Activated CD4-positive, alpha-beta T cell treated with anti-CD3 and anti-CD28 coated beads for 36 hours (primary cell): ENCODE measurements at regions of chr7 and their contacts with region 1.

Region 1: DNA sequence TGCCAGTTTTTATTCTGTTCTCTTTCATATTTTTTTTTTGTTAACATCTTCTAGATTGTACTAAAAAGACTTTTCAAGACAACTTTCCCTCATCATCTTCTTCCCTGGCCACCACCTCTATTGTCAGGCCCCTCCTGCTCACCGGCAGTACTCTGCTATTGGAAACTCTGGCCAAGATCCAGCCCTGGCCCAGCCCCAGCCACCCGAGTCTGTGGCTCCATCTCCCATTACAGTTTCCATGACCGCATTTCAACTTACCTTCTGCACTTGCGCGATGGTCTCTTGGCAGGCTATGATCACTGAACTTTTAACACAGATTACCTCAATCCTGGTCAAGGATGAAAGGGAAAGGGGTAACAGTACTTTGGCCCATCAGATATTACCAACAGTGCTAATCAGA is 137.7 kb upstream of the POM121L12 start:
- DNase-seq: no peak
- ATAC-seq: no peak
- H3K4me3 Mint-ChIP-seq: no peak overlapping the region
- H3K27ac Mint-ChIP-seq: no peak overlapping the region
- H3K4me1 Mint-ChIP-seq: no peaks in the 10 kb centered on the region
- H3K27me3 Mint-ChIP-seq: no peaks in the 10 kb centered on the region

Region 2: DNA sequence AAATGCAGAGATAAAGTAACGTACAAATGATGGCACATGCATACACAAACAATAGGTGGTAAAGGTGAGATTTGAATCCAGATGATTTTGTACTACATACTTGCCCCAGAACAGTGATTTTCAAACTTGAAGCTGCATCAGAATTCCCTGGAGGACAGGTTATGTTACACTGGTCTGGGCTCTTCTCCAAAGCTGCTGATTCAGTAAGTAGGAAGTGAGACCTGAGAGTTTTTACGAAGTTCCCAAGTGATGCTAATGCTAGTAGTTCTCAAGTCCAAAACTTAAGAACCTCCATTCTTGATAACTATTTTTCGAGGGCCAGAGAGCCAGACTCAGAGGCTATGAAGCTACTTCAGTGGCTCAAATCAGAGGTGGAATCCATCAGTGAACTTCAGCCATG is 21.3 kb before region 1 on chr7:
- CTCF ChIA-PET with region 1: no interaction called
- POLR2A ChIA-PET with region 1: no interaction called
- intact Hi-C with region 1: loop called in 1 of 2 experiments (anchors 2 kb)
- DNase-seq: no peak
- ATAC-seq: no peak
- H3K4me3 Mint-ChIP-seq: no peak overlapping the region
- H3K27ac Mint-ChIP-seq: no peak overlapping the region
- H3K4me1 Mint-ChIP-seq: no peaks in the 10 kb centered on the region
- H3K27me3 Mint-ChIP-seq: no peaks in the 10 kb centered on the region

Region 3: DNA sequence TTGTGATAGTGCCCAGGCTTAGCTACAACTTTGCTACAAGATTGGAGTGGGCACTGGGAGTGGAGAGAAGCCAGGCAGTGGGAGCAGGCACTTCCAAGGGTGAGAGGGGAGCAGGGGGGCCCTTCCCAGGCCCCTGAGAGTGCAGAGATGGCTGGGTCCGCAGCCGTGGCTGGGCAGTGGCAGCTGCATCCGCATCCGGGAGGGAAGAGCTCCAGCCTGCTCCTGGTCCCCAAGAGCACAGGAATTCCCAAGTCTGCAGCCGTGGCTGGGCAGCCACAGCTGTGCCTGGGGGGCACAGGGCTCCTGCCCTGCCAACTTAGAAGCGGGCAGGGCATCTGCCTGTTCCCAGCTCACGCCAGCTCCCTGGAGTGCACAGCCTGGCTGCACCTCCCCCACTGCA is 13.6 kb after region 1 on chr7:
- CTCF ChIA-PET with region 1: no interaction called
- POLR2A ChIA-PET with region 1: no interaction called
- intact Hi-C with region 1: no loop called
- DNase-seq: no peak
- ATAC-seq: no peak
- H3K4me3 Mint-ChIP-seq: no peak overlapping the region
- H3K27ac Mint-ChIP-seq: no peak overlapping the region
- H3K4me1 Mint-ChIP-seq: no peaks in the 10 kb centered on the region
- H3K27me3 Mint-ChIP-seq: no peaks in the 10 kb centered on the region